Ovary (tissue), 10 donors: ENCODE measurements at regions of chr22 and their contacts with region 1.

Region 1: DNA sequence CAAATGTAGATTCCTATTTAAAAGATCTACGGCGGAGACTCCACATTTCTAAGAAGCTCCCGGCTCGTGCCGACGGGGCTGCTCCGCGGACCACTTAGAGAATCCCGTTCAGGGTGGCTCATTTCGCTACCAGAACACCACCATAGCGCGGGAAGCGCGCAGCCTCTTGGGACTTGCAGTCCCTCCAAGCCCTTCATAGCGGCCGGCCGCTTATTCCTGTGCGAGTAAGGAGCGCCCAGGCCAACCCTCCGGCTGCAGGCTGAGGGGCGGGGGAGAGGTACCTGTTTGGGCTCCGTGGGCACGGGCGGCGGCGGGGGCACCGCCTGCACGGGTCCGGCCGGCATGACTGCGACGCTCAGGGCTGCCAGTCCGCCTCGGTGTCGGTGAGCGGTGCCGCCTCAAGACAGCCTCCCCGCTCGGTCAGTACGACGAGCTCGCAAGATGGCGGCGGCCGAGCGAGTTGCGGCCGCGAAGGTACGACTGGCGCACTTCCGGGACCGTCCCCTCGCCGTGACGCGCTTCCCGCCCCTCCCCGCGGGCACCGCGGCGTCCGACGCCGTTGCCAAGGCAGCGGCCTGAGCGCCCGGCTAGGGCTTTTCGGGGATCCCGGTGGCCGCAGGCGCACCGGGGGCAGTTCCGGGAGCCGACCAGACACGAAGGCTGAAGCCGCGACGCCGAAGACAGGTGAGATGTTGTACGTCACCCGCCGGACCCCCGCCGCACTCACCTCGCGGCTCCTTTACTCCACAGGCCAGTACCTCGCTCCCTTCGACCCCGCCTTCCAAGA is at the starts of genes CCDC157 and SF3A1:
- DNase-seq: peak; percentile 83 to 93 (median 88)
- H3K4me3 ChIP-seq: peak within 1 kb of the TSS; percentile 68
- H3K27ac ChIP-seq: peak within 1 kb of the TSS; percentile 93 to 96
- H3K4me1 ChIP-seq: peaks cover 8% of the 10 kb centered on the region
- H3K27me3 ChIP-seq: no peaks in the 10 kb centered on the region
- CTCF ChIP-seq: peak in 1 of 3 donors; percentile 37
- EP300 ChIP-seq: no peak
- POLR2A ChIP-seq: peak; percentile 97
- total RNA-seq, gene CCDC157: 2.0 to 28.0 (median 2.7) TPM
- total RNA-seq, gene SF3A1: 36.4 to 211 (median 176) TPM

Region 2: GRCh38 chr22:30289134-30289979 is 67.3 kb before region 1 on chr22 and contains the start of gene CASTOR1:
- intact Hi-C with region 1: loop called in 2 of 4 experiments (anchors 2 kb)
- DNase-seq: peak; percentile 98 to 99 (median 99)
- H3K4me3 ChIP-seq: peak within 1 kb of the TSS; percentile 97
- H3K27ac ChIP-seq: peak within 1 kb of the TSS; percentile 83 to 87
- H3K4me1 ChIP-seq: peaks cover 17% of the 10 kb centered on the region
- H3K27me3 ChIP-seq: no peaks in the 10 kb centered on the region
- CTCF ChIP-seq: peak in 1 of 3 donors; percentile 27
- EP300 ChIP-seq: peak; percentile 6
- POLR2A ChIP-seq: peak; percentile 79
- total RNA-seq, gene CASTOR1: 11.0 to 31.2 (median 20.6) TPM

Region 3: GRCh38 chr22:30326706-30327362 is 29.8 kb before region 1 on chr22 and contains the start of gene TBC1D10A:
- intact Hi-C with region 1: loop called in 1 of 4 experiments (anchors 2 kb)
- DNase-seq: peak; percentile 88 to 92 (median 90)
- H3K4me3 ChIP-seq: peak within 1 kb of the TSS; percentile 86
- H3K27ac ChIP-seq: peak within 1 kb of the TSS; percentile 71 to 76
- H3K4me1 ChIP-seq: peaks cover 18% of the 10 kb centered on the region
- H3K27me3 ChIP-seq: no peaks in the 10 kb centered on the region
- CTCF ChIP-seq: no peak
- EP300 ChIP-seq: no peak
- POLR2A ChIP-seq: peak; percentile 87
- total RNA-seq, gene TBC1D10A: 19.6 to 39.3 (median 30.7) TPM

Region 4: DNA sequence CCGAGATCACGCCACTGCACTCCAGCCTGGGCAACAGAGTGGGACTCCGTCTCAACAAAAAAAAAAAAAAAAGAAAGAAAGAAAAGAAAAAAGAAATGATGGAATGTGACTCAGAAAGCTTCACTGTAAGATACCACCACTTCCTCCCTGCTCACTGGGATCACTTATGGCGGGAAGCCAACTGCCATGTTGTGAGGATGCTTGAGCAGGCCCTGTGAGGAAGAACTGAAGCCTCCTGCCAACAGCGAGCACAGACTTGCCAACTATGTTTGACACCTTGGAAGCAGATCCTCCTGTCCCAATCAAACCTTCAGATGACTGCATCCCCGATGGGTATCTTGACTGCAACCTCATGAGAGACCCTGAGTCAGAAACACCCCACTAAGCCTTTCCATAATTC is 181.6 kb after region 1 on chr22:
- intact Hi-C with region 1: no loop called
- DNase-seq: no peak
- H3K4me3 ChIP-seq: no peak overlapping the region
- H3K27ac ChIP-seq: no peak overlapping the region
- H3K4me1 ChIP-seq: no peaks in the 10 kb centered on the region
- H3K27me3 ChIP-seq: no peaks in the 10 kb centered on the region
- CTCF ChIP-seq: no peak
- EP300 ChIP-seq: no peak
- POLR2A ChIP-seq: no peak